ENCODE measurements at regions of chr2 and their contacts with region 1.

Region 1: DNA sequence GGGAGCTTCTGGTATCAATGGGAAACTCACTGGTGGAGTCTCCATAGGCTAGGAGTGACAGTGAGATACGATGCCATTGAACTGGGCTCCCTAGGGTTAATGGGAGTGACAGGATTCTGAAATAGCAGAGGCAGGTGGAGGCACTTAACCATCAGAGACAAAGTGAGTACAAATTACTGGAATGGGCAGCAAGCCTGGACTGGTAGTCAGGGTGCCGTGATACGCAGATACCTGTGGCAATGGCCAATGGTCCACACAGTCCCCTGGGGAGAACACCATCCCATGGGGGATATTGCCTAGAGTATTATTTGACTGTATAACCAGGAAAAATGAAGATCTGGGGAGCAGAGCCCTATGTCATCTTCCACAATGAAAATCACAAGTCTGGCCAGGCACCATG is 17.3 kb downstream of the CHCHD5 start:
- DNase-seq: no peak
- ATAC-seq: no peak

Region 2: DNA sequence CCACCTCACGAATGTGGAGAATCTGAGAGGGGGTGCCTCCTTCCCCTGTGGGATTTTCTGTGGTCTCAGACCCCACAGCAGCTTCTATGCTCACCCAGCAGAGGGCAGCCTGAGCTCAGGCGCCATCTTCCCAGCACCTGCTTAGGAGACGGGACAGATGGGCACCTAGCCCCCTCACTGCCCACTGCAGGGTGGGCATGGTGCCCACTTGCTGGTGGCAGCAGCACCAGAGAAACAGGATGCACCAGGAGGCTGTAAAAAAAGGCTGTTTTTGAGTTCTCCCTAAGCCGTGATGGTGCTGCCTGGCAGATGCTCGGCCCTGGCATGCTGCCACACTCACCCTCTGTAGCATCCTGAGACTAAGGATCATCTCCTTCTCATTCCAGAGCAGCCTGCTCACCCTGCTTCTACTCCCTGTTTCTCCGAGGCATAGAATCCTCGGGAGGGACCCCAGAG is 24.9 kb after region 1 on chr2:
- intact Hi-C with region 1: no loop called
- DNase-seq: peak; percentile 79
- ATAC-seq: peak; percentile 77

Region 3: GRCh38 chr2:112644155-112644932 is 42.6 kb after region 1 on chr2:
- intact Hi-C with region 1: loop called (anchors 1 kb)
- DNase-seq: no peak
- ATAC-seq: no peak

Region 4: DNA sequence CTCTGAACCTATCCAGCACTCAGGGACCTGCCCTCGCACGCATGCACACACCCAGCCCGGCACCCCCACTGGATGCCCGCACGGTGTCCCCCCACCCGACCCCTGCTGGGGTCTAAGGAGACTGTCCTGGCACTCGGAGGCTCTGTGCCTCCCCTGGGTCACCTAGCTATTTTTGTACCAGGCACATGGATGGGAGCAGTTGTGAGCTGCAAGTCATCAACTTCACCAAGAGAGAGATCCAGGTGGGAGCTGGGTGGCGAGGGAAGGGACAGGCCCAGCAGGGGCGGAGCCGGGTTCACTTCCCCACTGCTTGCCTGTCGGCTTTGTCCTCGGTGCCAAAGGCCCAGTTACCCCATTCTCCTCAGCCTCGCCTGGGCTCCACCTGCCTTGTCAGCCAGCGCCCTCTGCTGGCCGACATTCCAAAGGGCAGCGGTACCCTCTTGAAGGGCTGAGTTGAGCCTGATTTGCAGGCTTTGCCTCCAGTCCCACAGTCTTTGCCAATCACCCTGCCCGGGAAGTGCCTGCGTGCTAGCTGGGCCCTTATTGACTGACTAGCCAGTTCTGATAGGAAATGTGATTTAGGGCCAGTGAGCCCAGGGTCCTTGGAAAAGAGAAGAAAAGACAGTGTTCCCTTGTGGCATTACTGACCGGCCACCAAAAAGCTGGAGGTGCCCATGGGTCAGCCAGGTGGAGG is 124.9 kb after region 1 on chr2:
- intact Hi-C with region 1: loop called (anchors 1 kb)
- DNase-seq: peak; percentile 96
- ATAC-seq: peak; percentile 92

Measured in Right ventricle myocardium inferior (tissue), 1 donor.